ENCODE measurements at regions of chr11 and their contacts with region 1.

Region 1: DNA sequence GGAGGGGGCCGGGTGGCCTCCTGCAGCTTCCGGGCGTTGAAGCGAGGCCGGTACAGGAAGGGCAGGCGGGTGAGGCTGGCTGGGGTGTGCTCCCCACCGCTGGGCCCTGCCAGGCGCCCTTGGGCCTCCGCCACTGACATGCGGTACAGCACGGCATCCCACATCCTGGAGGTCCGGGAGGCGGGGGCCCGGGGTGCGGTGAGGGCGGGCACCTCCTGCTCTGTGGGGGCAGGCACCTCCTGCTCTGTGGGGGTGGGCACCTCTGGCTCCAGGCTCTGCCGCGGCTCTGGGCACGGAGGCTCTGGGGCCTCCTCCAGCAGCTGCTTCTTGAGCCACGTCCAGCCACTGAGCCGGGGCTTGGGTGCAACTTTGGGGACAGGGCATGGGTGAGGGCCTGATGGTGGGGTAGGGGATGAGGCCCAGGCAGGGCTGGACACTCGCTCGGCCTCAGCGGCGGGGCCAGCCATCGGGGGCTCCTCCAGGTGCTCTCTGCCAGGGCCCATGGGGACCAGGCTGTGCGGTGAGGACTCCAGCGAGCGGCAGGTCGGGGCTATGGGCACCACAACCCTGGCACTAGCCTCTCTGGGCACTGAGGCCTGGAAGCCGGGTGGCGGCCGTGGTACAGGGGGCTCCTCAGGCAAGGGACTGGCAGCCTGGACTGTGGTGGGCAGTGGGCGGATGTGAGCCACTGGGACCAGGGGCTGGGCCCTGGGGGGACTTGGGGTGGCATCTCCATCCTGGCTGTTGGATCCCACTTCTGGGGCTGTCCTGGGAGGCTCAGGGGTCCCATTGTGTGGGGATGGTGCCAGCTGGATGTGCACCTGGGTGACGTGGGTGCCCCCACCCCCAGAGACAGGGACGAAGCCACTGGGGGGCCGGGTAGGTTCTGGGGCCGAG is 2.2 kb downstream of the PRR33 start:
- DNase-seq: peak; percentile 89
- H3K4me3 Mint-ChIP-seq: peak overlapping the region; percentile 68
- H3K27ac Mint-ChIP-seq: peak overlapping the region; percentile 87
- H3K4me1 Mint-ChIP-seq: peaks cover 42% of the 10 kb centered on the region
- H3K27me3 Mint-ChIP-seq: no peaks in the 10 kb centered on the region

Region 2: GRCh38 chr11:1728931-1729691 is 160.4 kb before region 1 on chr11:
- CTCF ChIA-PET with region 1: no interaction called
- DNase-seq: no peak
- H3K4me3 Mint-ChIP-seq: no peak overlapping the region
- H3K27ac Mint-ChIP-seq: no peak overlapping the region
- H3K4me1 Mint-ChIP-seq: peaks cover 20% of the 10 kb centered on the region
- H3K27me3 Mint-ChIP-seq: peaks cover 60% of the 10 kb centered on the region

Region 3: GRCh38 chr11:1807264-1807995 is 82.0 kb before region 1 on chr11:
- CTCF ChIA-PET with region 1: no interaction called
- DNase-seq: no peak
- H3K4me3 Mint-ChIP-seq: no peak overlapping the region
- H3K27ac Mint-ChIP-seq: no peak overlapping the region
- H3K4me1 Mint-ChIP-seq: no peaks in the 10 kb centered on the region
- H3K27me3 Mint-ChIP-seq: peaks cover 47% of the 10 kb centered on the region

Region 4: GRCh38 chr11:1817511-1817910 is 72.0 kb before region 1 on chr11:
- CTCF ChIA-PET with region 1: no interaction called
- DNase-seq: no peak
- H3K4me3 Mint-ChIP-seq: no peak overlapping the region
- H3K27ac Mint-ChIP-seq: no peak overlapping the region
- H3K4me1 Mint-ChIP-seq: no peaks in the 10 kb centered on the region
- H3K27me3 Mint-ChIP-seq: peaks cover 27% of the 10 kb centered on the region

Region 5: GRCh38 chr11:1917671-1918516 is 28.4 kb after region 1 on chr11:
- CTCF ChIA-PET with region 1: interaction called, 10 read pairs
- DNase-seq: no peak
- H3K4me3 Mint-ChIP-seq: no peak overlapping the region
- H3K27ac Mint-ChIP-seq: no peak overlapping the region
- H3K4me1 Mint-ChIP-seq: peaks cover 13% of the 10 kb centered on the region
- H3K27me3 Mint-ChIP-seq: peaks cover 45% of the 10 kb centered on the region

Region 6: DNA sequence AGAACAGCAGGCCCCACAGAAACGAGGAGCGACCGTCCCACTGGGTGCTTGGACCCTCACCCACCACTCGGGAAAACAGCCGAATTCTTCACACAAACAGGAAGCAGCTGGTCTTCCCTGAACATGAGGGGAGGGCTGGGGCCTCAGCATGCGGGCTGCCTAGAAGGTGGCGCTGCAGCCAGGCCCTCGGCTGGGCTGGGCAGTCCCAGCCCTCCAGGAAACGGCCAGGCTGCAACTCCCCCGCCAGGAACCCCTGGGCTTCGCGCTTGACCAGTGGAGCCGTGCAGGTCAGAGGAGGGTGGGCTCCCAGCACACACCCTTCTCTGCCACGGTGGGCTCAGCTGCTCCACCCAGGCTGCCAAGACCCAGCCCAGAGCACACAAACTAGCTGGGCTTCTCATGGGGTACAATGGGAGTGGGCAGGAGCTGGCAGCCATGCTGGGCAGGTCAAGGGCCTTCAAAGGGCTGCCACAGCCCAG is 220.1 kb after region 1 on chr11:
- CTCF ChIA-PET with region 1: no interaction called
- DNase-seq: no peak
- H3K4me3 Mint-ChIP-seq: no peak overlapping the region
- H3K27ac Mint-ChIP-seq: no peak overlapping the region
- H3K4me1 Mint-ChIP-seq: no peaks in the 10 kb centered on the region
- H3K27me3 Mint-ChIP-seq: peaks cover 30% of the 10 kb centered on the region